ENCODE measurements at regions of chr5 and their contacts with region 1.

Region 1: DNA sequence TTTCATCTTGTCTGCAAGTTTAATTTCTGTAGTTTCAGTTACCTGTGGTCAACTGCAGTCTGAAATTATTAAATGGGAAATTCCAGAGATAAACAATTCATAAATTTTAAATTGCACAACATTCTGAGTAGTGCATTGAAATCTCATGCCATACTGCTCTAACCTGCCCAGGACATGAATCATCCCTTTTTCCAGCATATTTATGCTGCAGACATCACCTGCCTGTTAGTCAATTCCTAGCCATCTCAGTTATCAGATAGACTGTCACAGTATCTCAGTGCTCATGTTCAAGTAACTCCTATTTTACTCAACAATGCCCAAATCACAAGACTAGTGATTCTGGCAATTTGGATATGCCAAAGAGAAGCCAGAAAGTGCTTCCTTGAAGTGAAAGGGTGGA is 223.0 kb upstream of the GRIA1 start:
- DNase-seq: no peak
- CTCF ChIP-seq: no peak

Region 2: DNA sequence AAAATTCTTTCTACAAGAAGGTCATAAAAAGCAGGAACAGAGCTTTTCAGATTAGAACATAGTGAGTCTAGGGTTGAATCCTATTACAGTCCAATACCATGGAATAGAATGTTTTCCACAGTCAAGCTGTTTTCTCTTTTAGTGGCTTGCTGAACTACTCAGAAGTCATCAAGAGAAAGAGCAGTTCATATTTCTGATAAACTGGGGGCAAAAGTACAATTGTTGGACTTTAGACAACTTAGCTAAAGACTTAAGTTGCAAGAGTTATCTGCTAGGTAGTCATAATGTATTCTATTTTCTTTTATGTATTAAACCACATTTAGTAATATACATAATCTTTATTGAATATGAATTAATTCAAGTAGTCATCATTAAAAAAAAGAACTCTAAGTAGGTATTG is 10.1 kb before region 1 on chr5:
- CTCF ChIA-PET with region 1: interaction called, 17 read pairs
- POLR2A ChIA-PET with region 1: no interaction called
- DNase-seq: no peak
- CTCF ChIP-seq: no peak

Measured in GM10248 (cell line).